ENCODE measurements at regions of chr9 and their contacts with region 1.

Region 1: DNA sequence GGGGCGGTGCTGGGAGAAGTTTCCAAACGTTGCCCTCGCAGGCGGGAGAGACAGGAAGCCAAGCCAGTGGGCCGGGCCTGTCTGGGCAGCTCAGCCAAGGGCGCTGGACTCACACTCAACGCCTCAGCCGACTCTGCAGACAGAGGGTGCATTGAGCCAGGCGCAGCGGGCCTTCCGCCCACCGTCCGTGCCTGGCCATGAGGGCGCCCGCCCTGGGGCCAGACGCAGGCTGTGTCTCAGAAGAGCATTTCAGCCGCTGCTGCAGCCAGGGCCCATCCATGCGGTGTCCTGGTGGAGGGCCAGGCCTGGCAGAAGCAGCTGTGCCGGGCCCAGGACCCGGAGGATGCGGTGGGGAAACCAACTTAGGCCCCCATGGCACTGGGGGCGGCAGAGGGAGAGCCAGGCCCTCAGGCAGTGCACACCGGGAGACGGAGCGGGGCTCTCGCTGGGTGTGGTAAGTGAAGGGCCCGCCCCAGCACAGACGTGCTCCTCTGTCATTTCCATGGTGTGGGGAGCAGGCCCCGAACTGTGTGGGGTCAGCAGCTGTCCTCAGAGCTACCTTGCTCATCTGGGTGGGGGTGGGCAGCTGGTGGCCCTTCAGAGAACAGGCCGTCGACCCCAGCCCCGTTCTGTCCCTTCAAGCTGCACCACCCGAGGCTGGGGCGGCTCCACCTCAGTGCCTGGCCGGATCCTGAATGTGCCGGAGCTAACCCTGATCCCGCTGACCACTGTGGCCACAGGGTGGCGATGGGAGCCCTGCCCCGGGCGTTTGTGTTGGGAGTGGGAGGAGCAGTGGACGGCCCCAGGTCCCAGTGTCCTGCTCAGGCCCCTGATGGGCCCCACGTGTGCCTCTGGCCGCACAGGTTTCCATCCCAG is 18.0 kb downstream of the DNLZ start:
- DNase-seq: peak; percentile 57
- ATAC-seq: peak; percentile 79
- H3K4me3 ChIP-seq: peak overlapping the region; percentile 56
- H3K27ac ChIP-seq: no peak overlapping the region
- H3K4me1 ChIP-seq: peaks cover 12% of the 10 kb centered on the region; the same call in 1 of the 2 replicates
- H3K27me3 ChIP-seq: no peaks in the 10 kb centered on the region
- CTCF ChIP-seq: peak; percentile 51

Region 2: DNA sequence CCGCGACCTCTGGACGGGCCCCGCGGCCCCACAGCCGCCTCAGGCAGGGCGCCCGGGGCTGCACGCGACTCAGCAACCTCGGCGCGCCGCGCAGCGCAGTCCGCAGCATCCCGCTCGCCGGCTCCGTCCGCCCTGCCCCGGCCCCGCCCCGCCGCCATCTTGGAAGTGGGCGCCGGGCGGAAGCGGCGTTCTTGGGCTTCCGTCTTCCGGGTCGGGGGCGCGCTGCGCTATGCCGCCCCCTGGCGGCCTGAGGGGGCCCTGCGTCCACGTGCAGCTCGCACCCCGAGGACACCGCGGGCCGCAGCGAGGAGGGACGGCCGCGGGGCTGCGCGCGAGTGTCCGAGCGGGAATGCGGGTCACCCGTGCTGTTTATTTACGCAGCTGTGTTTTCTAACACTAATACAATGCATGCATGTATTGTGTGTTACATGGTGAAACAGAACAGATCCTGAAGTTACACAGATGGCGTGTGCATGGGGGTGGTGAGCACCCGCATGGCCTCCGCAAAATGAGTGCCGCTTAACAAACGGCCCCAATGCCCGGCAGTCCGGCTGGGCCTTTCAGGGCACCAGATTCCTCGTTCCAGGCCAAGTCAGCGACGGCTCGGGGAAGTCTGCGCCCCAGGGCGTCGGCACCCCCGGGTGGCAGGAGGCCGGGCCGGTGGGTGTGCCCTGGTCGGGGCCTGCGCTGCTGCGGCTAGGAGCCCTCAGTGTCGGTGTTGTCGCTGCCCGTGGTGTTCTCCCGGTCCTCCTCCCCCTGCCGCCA is 18.3 kb after region 1 on chr9 and contains the start of gene DNLZ:
- CTCF ChIA-PET with region 1: interaction called, 13 read pairs
- POLR2A ChIA-PET with region 1: interaction called, 7 read pairs
- intact Hi-C with region 1: loop called (anchors 2 kb)
- DNase-seq: peak; percentile 78
- ATAC-seq: peak; percentile 65
- H3K4me3 ChIP-seq: peak within 1 kb of the TSS; percentile 71
- H3K27ac ChIP-seq: peak within 1 kb of the TSS; percentile 75
- H3K4me1 ChIP-seq: peaks cover 9% of the 10 kb centered on the region; the same call in 1 of the 2 replicates
- H3K27me3 ChIP-seq: no peaks in the 10 kb centered on the region
- CTCF ChIP-seq: peak; percentile 74
- total RNA-seq, gene DNLZ: 51.4 and 64.9 TPM in 2 replicates